ENCODE measurements at regions of chr15 and their contacts with region 1.

Region 1: DNA sequence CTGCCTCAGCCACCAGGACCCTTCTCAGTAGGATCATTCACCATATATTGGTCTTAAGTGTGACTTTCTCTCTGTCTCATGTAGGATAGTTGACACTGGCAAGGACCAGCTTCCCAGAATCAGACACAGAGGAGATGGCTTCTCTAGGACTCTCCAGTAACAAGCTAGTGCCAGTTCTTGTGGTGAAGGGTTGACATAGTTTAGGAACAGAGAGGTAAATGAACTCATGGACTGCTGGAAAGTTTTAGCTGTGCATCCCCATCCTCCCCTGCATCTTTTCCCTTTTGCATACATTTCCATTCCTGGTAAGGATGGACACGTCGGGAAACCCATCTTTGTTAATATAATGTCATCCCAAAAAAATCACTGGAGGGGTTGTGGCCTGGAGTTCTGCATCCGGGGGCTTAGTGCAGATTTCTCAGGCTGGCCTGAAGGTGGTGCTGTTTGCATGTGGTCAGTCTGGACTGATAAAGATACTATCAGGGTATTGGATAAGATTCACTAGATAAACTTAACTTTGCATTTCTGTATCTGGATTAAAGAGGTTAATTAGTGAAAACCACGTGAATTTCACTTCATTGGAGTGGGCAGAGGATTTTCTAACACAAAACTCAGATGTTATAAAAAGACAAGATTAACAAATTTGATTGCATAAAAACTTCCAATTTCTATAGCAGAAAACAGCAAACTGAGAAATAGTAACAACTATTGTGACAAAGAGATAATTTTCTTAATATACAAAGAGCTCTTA is 110.8 kb downstream of the TBC1D2B start:
- DNase-seq: no peak
- H3K4me3 ChIP-seq: no peak overlapping the region
- CTCF ChIP-seq: peak; percentile 73

Region 2: DNA sequence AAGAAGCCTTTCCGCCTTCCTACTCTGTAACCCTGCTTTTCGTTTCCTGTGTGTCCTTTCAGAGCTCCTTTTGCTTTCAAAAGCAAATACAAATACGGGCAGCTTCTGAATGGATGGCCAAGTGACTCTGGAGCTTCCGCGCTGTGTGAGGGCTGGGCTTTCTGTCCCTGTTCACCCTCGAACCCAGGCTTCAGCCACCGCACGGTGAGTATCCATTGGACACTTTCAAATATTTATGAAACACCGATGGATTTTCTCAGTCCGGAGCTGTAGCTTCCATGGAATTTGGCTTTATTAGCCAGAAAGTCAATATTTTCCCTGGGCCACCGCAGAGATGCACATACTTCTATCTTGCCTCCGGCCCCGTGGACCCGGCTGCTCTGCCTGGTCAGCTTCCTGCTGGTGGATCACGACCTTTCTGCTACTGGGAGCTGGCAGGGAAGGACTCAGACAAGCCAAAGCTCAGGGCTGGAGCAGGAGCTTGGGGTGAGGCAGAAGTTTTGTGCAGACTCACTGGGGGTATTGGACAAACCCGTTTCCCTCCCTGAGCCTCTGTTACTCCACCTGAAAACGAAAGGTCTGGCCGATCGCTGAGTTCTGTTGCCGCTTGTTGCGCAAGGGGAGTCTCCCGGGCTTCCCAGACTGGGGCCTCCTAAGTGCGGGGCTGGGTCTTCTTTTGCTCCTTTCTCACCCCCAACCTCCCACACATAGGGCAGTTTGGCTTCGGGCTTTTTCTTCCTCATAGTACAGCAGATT is 397.6 kb before region 1 on chr15:
- CTCF ChIA-PET with region 1: no interaction called
- POLR2A ChIA-PET with region 1: no interaction called
- DNase-seq: no peak
- H3K4me3 ChIP-seq: no peak overlapping the region
- CTCF ChIP-seq: no peak

Region 3: GRCh38 chr15:77738441-77739302 is 228.0 kb before region 1 on chr15:
- CTCF ChIA-PET with region 1: no interaction called
- POLR2A ChIA-PET with region 1: no interaction called
- DNase-seq: no peak
- H3K4me3 ChIP-seq: no peak overlapping the region
- CTCF ChIP-seq: no peak

Region 4: DNA sequence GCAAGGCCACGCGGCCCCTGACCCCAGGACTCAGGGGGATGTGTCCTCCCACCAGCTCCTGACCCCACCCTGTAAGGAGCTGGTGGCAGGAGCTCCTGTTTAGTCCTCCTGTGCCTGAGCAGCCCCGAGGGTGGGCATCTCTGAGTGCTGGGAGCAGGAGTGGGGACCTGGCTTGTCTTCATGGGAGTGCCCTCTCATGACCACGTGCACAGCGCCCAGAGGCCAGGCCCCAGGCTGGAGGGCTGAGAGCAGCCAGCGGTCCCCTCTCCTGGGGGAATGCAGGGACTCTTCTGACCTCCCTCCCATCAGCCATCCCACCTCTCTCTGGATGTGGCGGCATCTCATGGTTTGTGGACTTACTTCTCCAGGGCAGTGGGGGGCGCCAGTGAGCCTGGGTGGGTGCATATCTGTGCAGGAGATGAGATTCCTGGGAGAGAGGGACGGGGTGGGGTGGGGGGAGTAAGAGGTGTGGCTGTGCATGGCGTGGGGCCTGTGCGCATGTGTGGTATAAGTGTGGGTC is 94.8 kb before region 1 on chr15:
- CTCF ChIA-PET with region 1: no interaction called
- POLR2A ChIA-PET with region 1: no interaction called
- DNase-seq: no peak
- H3K4me3 ChIP-seq: no peak overlapping the region
- CTCF ChIP-seq: peak; percentile 19

Region 5: GRCh38 chr15:78049691-78050440 is 83.2 kb after region 1 on chr15:
- CTCF ChIA-PET with region 1: interaction called, 10 read pairs
- POLR2A ChIA-PET with region 1: no interaction called
- DNase-seq: peak; percentile 96
- H3K4me3 ChIP-seq: no peak overlapping the region
- CTCF ChIP-seq: no peak

Region 6: DNA sequence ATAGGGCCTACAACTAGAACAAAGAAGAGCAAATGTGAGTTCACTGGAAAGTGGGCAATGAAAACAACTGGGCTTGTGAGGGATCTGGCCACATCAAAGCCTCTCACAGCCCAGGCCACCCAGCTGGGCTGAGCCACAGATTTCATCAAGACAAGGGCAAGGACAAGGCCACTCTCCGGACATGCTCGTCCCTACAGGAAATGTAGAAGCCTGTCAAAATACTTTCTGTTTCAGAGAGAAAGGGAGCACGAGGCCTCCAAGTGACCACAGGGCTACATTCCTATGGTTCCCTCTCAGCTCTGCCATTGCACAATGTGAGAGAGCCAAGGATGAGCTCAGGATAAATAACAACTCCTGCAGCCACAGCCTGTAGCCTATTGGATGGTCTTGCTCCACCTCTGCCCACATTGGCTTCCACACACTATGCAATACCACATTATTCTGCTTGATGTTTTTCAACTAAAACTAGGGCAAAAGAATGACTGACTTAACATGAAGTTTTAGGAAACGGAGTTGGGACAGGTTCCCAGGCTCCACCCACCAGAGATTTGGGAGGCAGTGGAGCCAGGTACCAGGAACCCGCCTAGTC is 98.7 kb after region 1 on chr15:
- CTCF ChIA-PET with region 1: interaction called, 10 read pairs
- POLR2A ChIA-PET with region 1: no interaction called
- DNase-seq: peak; percentile 97
- H3K4me3 ChIP-seq: peak overlapping the region; percentile 35
- CTCF ChIP-seq: no peak

Region 7: GRCh38 chr15:78072080-78072892 is 105.6 kb after region 1 on chr15:
- CTCF ChIA-PET with region 1: interaction called, 10 read pairs
- POLR2A ChIA-PET with region 1: no interaction called
- DNase-seq: peak; percentile 90
- H3K4me3 ChIP-seq: peak overlapping the region; percentile 16
- CTCF ChIP-seq: no peak

Region 8: DNA sequence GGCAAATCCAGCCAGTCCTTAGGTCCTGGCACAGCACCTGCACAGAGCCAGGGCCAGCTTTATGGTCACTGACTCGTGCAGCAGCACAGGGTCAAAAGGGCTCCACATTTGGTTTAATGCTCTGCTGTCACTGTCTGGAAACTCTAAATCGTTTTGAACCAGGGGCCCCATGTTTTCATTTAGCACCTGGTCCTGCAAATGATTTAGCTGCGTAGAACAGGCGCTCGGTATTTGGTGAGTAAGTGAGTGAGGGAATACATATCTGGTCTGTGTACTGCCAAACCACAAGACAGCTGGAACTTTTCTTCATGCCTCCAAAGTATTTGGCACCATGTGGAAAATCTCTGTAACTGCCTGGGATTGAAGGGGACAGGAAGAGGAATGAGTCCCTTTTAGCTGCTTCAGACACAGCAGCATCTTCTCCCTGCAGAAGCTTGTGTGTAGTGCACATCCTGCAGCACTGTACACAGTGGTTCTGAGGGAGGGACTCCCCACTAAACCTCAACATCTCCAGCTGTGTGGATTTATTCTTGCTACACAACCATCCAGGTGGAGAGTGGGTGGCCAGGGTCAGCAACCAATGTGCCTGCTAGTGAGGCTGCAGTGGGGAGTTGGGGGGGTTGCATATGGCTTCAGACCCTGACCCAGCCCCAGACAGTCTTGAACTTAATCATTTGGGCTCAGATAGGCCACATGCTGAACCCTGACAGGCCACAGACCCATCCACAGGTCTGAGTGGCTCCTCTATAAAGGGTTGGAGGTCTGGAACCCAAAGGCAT is 126.7 kb after region 1 on chr15:
- CTCF ChIA-PET with region 1: interaction called, 538 read pairs
- POLR2A ChIA-PET with region 1: no interaction called
- DNase-seq: peak; percentile 80
- H3K4me3 ChIP-seq: no peak overlapping the region
- CTCF ChIP-seq: no peak

Measured in AG04449 (cell line).